ENCODE measurements at regions of chr6 and their contacts with region 1.

Region 1: DNA sequence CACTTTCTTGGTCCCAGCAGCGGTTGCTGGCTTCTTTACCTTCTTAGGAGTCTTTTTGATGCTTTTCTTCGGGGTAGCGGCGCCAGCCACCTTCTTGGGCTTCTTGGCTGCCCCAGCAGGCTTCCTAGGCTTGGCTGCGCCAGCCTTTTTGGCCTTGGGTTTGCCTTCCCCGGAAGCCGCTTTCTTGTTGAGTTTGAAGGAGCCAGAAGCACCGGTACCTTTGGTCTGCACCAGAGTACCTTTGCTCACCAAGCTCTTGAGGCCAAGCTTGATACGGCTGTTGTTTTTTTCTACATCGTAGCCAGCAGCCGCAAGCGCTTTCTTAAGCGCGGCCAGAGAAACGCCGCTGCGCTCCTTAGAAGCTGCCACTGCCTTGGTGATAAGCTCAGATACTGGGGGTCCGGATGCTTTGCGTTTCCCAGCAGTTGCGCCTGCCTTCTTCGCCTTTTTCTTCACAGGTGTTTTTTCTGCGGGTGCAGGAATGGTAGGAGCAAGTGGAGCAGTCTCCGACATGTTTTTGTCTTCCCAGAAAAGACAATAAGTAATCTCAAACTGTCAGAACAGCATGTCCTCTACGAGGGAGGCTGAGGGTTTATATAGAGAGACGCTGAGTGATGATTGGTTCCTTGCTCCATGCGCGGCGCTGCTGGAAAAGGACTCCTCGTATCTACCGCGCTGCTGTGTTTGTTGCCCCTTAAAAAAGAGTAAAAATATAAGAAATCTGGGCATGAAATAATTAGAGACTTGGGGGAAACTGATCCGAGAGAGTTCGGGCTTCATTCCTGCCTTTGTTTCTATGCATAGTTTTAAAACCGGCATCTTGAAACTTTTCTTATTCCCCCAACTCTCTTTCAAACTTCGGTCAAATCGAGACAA is 130.3 kb upstream of the BTN3A2 start:
- DNase-seq: peak; percentile 95
- H3K4me3 Mint-ChIP-seq: peak overlapping the region; percentile 82
- H3K27ac Mint-ChIP-seq: peak overlapping the region; percentile 97
- H3K4me1 Mint-ChIP-seq: peaks cover 39% of the 10 kb centered on the region
- H3K27me3 Mint-ChIP-seq: no peaks in the 10 kb centered on the region

Region 2: GRCh38 chr6:26223650-26224546 is 10.8 kb before region 1 on chr6:
- intact Hi-C with region 1: loop called (anchors 1 kb)
- DNase-seq: peak; percentile 90
- H3K4me3 Mint-ChIP-seq: no peak overlapping the region
- H3K27ac Mint-ChIP-seq: no peak overlapping the region
- H3K4me1 Mint-ChIP-seq: peaks cover 30% of the 10 kb centered on the region
- H3K27me3 Mint-ChIP-seq: no peaks in the 10 kb centered on the region

Region 3: GRCh38 chr6:26249957-26250697 is 15.5 kb after region 1 on chr6:
- intact Hi-C with region 1: loop called (anchors 1 kb)
- DNase-seq: peak; percentile 92
- H3K4me3 Mint-ChIP-seq: peak overlapping the region; percentile 95
- H3K27ac Mint-ChIP-seq: peak overlapping the region; percentile 95
- H3K4me1 Mint-ChIP-seq: peaks cover 37% of the 10 kb centered on the region
- H3K27me3 Mint-ChIP-seq: no peaks in the 10 kb centered on the region

Region 4: DNA sequence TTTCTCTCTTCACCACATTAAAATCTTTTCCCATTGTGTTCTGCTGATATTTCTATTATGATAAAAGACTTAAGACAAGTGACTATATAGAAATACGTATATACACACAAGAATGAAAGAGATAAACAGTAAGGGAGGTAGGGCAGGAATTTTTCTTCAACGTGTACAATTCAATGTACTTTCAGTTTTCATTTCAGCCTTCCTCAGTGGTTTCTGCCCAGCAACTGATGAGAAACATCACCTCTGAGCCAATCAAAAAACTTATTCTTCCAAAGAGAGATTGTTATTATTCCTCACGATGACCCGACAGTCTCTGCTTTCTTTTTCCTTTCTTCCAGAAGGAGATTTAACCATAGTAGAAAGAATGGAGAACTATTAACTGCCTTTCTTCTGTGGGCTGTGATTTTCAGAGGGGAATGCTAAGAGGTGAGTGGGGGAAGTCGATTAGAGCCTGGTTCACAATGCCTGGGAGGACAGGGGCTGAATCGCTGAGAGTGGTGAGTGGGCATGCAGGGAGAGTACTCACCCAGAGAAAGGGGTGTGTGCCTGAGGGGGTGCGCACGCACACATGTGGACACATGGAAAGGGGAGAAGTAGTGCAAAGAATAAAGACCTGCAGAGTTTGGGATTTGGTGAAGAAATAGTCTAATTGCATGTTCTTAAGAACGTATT is 167.5 kb after region 1 on chr6 and contains the start of gene BTN3A1:
- intact Hi-C with region 1: no loop called
- DNase-seq: peak; percentile 91
- H3K4me3 Mint-ChIP-seq: peak within 1 kb of the TSS; percentile 96
- H3K27ac Mint-ChIP-seq: peak within 1 kb of the TSS; percentile 97
- H3K4me1 Mint-ChIP-seq: peaks cover 39% of the 10 kb centered on the region
- H3K27me3 Mint-ChIP-seq: no peaks in the 10 kb centered on the region
- total RNA-seq, gene BTN3A1: 29.6 and 33.2 TPM in 2 replicates